Activated CD4-positive, alpha-beta T cell treated with anti-CD3 and anti-CD28 coated beads for 36 hours (primary cell): ENCODE measurements at regions of chr2 and their contacts with region 1.

Region 1: DNA sequence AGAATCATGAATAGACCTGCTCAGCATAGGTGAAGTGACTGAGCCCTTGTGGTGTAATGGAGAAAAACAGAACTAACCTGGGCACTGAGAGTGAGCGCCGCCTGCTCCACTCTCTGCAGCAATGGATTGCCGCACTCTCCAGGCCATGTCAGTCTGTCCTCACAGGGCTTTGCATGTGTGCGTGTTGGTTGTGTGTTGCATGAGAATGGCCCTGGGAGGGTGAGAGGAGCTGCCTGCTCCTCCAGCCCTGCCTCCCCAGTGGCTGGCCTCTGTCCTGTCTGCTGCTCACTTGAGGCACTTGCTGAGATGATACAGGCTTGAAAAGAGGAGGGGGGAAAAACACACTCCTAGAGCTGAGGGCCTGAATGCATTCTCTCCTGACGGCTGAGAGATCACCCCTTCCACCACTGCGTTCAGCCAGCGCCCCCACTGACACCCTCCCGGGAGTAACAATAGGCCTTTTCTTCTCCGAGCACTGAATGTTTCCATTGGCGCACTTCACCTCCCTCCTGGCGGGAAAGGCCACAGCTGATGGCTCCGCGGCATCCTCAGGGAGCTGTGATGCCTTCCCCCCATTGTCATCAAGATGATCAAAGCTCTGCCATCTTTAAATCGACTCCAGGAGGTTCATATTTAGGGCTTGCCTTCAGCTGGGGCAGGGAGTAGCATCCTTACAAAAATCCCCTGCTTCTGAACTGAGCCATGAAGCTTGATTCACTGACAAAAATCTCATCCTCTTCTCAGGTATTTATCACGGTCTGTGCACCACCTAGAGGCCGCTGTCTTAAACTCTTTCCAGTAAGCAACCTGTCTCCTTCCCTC is 49.9 kb upstream of the DAPL1 start:
- DNase-seq: peak; percentile 65
- ATAC-seq: no peak
- H3K4me3 Mint-ChIP-seq: no peak overlapping the region
- H3K27ac Mint-ChIP-seq: no peak overlapping the region
- H3K4me1 Mint-ChIP-seq: no peaks in the 10 kb centered on the region
- H3K27me3 Mint-ChIP-seq: peaks cover 23% of the 10 kb centered on the region

Region 2: GRCh38 chr2:158034199-158034866 is 710.9 kb before region 1 on chr2:
- CTCF ChIA-PET with region 1: interaction called, 7 read pairs
- POLR2A ChIA-PET with region 1: no interaction called
- intact Hi-C with region 1: loop called in 1 of 2 experiments (anchors 1 kb)
- DNase-seq: peak; percentile 26
- ATAC-seq: peak; percentile 69
- H3K4me3 Mint-ChIP-seq: no peak overlapping the region
- H3K27ac Mint-ChIP-seq: no peak overlapping the region
- H3K4me1 Mint-ChIP-seq: no peaks in the 10 kb centered on the region
- H3K27me3 Mint-ChIP-seq: peaks cover 3% of the 10 kb centered on the region

Region 3: DNA sequence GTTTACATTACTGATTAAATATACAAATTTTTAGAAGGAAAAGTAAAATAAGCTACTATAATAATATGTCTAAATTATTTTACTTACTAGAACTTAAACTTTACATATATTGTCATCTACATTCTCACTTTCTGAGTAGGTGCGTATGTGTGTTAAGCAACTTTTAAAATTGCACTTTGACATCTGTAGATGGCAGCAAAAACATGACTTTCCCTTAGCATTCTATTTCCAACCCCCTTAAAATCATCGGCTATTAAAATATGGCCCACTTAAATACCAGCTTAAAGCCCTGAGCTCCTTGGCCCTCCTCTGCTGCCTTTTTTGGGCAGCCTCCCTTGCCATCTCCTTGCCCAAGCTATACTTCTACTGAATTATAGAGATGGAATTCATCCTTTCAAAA is 565.6 kb before region 1 on chr2:
- CTCF ChIA-PET with region 1: interaction called, 12 read pairs
- POLR2A ChIA-PET with region 1: no interaction called
- intact Hi-C with region 1: loop called (anchors 2 kb)
- DNase-seq: no peak
- ATAC-seq: no peak
- H3K4me3 Mint-ChIP-seq: no peak overlapping the region
- H3K27ac Mint-ChIP-seq: no peak overlapping the region
- H3K4me1 Mint-ChIP-seq: no peaks in the 10 kb centered on the region
- H3K27me3 Mint-ChIP-seq: peaks cover 35% of the 10 kb centered on the region